Activated CD4-positive, alpha-beta T cell treated with anti-CD3 and anti-CD28 coated beads, Interleukin-2, amount 10 ng/mL, durations not matched to agents 24 days and 14 days (primary cell): ENCODE measurements at regions of chr9 and their contacts with region 1.

Region 1: GRCh38 chr9:108933718-108934322 is at the start of gene ELP1:
- DNase-seq: peak; percentile 98
- H3K4me3 Mint-ChIP-seq: peak within 1 kb of the TSS; percentile 97
- H3K27ac Mint-ChIP-seq: peak within 1 kb of the TSS; percentile 99
- H3K4me1 Mint-ChIP-seq: peaks cover 26% of the 10 kb centered on the region
- H3K27me3 Mint-ChIP-seq: no peaks in the 10 kb centered on the region
- total RNA-seq, gene ELP1: 35.2 and 36.2 TPM in 2 replicates

Region 2: GRCh38 chr9:108885643-108886348 is 48.0 kb before region 1 on chr9:
- intact Hi-C with region 1: loop called (anchors 1 kb)
- DNase-seq: peak; percentile 59
- H3K4me3 Mint-ChIP-seq: peak overlapping the region; percentile 54
- H3K27ac Mint-ChIP-seq: peak overlapping the region; percentile 89
- H3K4me1 Mint-ChIP-seq: peaks cover 11% of the 10 kb centered on the region
- H3K27me3 Mint-ChIP-seq: no peaks in the 10 kb centered on the region

Region 3: GRCh38 chr9:109119439-109120203 is 185.8 kb after region 1 on chr9 and contains the start of gene TMEM245:
- intact Hi-C with region 1: loop called (anchors 1 kb)
- DNase-seq: peak; percentile 98
- H3K4me3 Mint-ChIP-seq: peak within 1 kb of the TSS; percentile 90
- H3K27ac Mint-ChIP-seq: peak within 1 kb of the TSS; percentile 94
- H3K4me1 Mint-ChIP-seq: peaks cover 38% of the 10 kb centered on the region
- H3K27me3 Mint-ChIP-seq: no peaks in the 10 kb centered on the region
- total RNA-seq, gene TMEM245: 26.7 and 27.0 TPM in 2 replicates